ENCODE measurements at regions of chr10 and their contacts with region 1.

Region 1: DNA sequence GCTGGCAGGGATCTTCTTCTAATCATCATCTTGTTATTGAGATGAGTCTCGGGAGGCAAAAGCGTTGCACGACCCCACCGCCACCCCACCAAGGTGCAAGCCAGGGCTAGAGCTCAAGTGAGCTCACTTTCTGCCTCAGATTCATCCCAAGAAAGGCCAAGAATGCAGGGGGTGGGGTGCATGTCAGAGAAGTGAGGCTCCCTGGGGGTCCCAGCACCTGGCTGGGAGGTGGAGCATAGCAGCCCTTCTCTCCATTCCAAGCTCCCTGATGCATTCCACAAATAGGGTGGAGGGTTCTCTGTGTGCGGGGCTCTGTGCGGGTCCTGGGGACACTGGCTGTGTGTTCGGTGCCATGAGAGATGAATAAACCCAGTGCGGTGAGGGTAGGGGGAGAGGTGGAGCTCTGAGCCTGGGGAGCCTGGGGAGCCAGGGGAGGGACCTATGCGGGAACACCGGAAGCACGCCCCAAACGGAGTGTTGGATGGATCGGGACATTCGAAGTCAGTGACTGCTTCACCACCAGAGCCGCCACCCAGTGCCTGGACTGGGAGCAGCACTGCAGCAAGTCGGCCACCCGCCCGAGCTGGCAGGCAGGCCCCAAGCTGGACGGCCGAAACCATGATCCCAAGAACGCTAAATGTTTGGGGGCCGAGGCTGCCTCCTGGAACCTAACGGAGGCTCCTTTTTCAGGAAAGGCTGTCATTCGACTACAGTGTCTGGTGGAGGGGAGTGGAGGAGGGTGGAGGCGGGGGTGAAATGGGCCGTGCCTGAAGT is 17.9 kb upstream of the HMX3 start:
- DNase-seq: no peak

Region 2: DNA sequence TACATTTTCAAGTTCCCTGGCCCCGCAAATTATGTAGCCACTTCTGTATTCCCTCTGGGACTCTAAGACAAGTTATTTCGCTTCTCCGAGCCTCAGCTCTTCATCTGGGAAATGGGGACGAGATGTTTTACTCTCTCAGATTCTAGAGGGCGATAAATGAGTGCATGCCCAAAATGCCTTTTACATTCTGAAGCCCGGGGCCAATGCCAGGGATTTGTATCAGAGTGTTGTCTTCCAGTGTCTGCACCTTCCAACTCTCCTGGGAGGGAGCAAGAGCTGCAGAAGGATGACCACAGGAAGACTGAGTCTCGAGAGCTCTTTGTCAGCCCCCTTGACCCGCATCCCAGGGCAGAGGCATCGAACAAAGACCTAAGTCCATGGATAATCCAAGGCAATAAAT is 76.2 kb after region 1 on chr10:
- intact Hi-C with region 1: no loop called
- DNase-seq: no peak

Region 3: DNA sequence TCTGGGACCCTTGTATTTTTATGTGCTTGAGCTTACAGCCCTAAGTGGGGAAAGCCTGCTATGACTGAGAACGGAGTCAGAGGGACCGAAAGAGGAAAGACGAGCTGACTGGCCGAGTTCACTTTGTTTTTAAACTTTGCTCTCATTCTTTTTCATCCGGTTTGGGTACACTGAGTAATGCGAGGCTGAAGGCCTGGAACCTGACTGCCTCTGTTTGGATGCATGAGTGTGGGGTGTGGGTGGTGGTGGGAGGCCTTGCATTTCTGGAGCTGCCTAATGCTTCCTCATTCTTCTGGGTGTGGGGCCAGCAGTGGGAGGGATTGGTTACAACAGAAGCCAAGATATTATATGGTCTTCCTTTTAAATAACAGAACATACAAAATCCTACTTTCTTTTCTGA is 191.9 kb after region 1 on chr10:
- intact Hi-C with region 1: no loop called
- DNase-seq: no peak

Region 4: DNA sequence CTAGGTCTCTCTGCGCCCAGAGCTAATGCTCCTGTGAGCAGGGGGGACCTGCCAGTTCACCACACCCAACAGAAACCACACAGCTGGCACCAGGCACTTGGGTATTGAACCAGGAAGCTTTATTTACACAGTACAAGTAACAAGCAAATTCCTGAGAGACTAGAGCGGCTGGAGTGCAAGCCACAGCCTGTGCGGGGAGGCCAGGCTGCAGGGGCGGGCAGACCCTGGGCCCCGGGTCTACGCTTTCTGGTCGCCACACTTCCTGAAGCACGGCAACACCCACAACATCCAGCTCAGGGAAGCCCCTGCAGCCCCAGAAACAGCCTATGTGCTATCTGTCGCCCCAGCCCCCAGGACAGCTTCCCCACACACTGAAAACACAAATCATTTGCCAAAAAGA is 1501.4 kb after region 1 on chr10:
- intact Hi-C with region 1: loop called in 1 of 2 experiments (anchors 5 kb)
- DNase-seq: no peak

Measured in posterior vena cava (tissue), 2 donors.